ENCODE measurements at regions of chr10 and their contacts with region 1.

Region 1: GRCh38 chr10:49187950-49188761 is at the start of gene TMEM273:
- DNase-seq: no peak
- H3K4me3 Mint-ChIP-seq: peak within 1 kb of the TSS; percentile 85
- H3K27ac Mint-ChIP-seq: peak within 1 kb of the TSS; percentile 83
- H3K4me1 Mint-ChIP-seq: peaks cover 77% of the 10 kb centered on the region
- H3K27me3 Mint-ChIP-seq: peaks cover 2% of the 10 kb centered on the region
- total RNA-seq, gene TMEM273: 53.2 and 58.4 TPM in 2 replicates

Region 2: GRCh38 chr10:49164559-49165188 is 23.5 kb before region 1 on chr10:
- intact Hi-C with region 1: no loop called
- DNase-seq: peak; percentile 50
- H3K4me3 Mint-ChIP-seq: no peak overlapping the region
- H3K27ac Mint-ChIP-seq: peak overlapping the region; percentile 7
- H3K4me1 Mint-ChIP-seq: peaks cover 41% of the 10 kb centered on the region
- H3K27me3 Mint-ChIP-seq: no peaks in the 10 kb centered on the region

Region 3: DNA sequence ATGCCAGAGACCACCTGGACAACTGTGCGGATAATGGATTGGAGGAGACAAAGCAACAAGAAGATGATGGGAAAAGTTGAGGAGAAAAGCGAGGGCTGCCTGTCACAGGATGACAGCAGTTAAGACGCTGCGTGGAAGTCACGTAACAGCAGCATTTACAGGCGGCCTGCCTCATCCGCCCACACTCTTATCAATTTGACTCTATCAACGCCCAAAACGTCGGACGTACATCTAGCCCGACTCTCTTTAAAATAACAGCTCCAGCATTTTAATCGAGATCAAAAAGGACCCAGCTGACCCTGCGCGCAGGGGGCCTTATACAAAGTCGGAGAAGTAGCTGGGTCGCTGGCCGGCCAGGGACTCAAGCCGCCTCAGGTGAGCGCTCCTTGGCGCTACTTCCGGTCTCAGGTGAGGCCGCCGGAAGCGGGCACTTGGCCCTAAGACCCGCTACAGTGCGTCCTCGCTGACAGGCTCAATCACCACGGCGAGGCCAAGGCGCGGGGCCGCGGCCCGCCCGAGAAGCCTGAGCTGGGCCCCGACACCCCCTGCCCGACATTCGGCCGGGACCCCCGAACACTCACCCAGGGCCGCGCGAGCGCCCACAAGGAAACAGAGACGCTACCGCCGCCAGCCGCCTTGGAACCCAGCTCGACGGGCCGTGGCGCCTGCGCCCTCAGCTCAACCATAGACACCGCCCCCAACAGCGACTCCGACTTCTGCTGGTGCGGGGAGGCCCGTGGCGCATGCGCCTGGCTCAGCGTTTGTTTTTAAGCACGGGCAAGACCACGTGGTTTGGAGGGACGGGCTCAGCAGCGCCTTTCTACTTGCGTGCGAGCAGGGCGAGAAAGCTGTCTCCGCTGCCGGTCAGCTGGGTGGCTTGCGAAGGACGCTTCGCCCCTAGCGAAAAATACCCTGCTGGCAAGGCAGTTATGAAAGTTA is 350.5 kb after region 1 on chr10 and contains the start of gene ERCC6:
- intact Hi-C with region 1: loop called (anchors 5 kb)
- DNase-seq: peak; percentile 96
- H3K4me3 Mint-ChIP-seq: peak within 1 kb of the TSS; percentile 89
- H3K27ac Mint-ChIP-seq: peak within 1 kb of the TSS; percentile 94
- H3K4me1 Mint-ChIP-seq: peaks cover 36% of the 10 kb centered on the region
- H3K27me3 Mint-ChIP-seq: peaks cover 3% of the 10 kb centered on the region
- total RNA-seq, gene ERCC6: 22.7 and 26.2 TPM in 2 replicates

Region 4: GRCh38 chr10:50275650-50276235 is 1087.6 kb after region 1 on chr10:
- intact Hi-C with region 1: no loop called
- DNase-seq: no peak
- H3K4me3 Mint-ChIP-seq: no peak overlapping the region
- H3K27ac Mint-ChIP-seq: no peak overlapping the region
- H3K4me1 Mint-ChIP-seq: peaks cover 1% of the 10 kb centered on the region
- H3K27me3 Mint-ChIP-seq: peaks cover 53% of the 10 kb centered on the region

Measured in activated T-helper 2 cell treated with anti-CD3 and anti-CD28 coated beads, Interferon-gamma antibody, Interleukin-2, Interleukin-4, amounts not matched to agents 10 μg/mL and 5 μg/mL and 100 μg/mL, durations not matched to agents 14 hours and 24 hours and 36 hours (primary cell).